Activated CD4-positive, alpha-beta T cell treated with anti-CD3 and anti-CD28 coated beads for 36 hours (primary cell): ENCODE measurements at regions of chr11 and their contacts with region 1.

Region 1: DNA sequence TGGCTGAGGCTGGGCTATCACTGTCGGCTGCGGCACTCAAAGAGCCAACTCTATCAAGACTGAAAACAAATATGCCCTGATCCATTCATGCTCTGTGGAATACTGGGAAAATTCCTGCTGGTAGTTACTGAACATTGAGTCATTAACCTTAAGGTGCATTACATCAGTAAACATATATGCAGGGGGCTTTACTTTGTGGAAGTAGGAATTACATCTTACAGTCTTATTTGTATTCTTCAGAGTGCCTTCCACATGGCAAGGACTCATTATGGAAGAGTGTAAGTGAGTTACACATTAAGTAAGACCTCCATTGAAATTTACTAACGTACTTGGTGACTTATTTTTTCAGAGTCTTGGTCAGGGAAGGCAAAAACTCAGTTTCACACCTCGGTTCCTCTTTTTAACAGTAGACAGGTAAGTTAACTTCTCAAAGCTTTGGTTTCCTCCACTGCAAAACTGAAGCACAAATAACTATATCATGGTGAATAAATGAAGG is 4.5 kb downstream of the OR5B21 start:
- DNase-seq: no peak
- ATAC-seq: no peak
- H3K4me3 Mint-ChIP-seq: no peak overlapping the region
- H3K27ac Mint-ChIP-seq: no peak overlapping the region
- H3K4me1 Mint-ChIP-seq: peaks cover 28% of the 10 kb centered on the region
- H3K27me3 Mint-ChIP-seq: no peaks in the 10 kb centered on the region

Region 2: DNA sequence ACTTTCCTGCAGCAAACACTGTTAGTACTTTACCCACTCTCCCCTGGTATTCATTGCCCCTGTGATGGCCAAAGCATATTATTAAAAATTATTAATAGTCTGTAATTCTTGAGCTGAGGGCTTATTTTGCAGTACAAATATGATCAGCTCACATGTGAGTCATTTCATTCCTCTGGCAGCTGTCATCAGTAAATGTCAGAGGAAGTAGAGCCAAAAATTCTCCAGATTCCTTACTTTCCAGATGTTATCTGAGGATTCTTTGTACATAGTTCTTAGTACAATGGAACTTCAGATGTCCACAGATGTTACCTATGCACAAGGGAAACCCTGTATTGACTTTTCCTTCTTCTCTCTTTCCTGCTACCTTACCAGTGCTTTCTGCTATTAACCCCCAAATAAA is 109.2 kb before region 1 on chr11:
- CTCF ChIA-PET with region 1: no interaction called
- POLR2A ChIA-PET with region 1: interaction called, 4 read pairs
- intact Hi-C with region 1: loop called in 1 of 2 experiments (anchors 5 kb)
- DNase-seq: no peak
- ATAC-seq: no peak
- H3K4me3 Mint-ChIP-seq: no peak overlapping the region
- H3K27ac Mint-ChIP-seq: no peak overlapping the region
- H3K4me1 Mint-ChIP-seq: peaks cover 11% of the 10 kb centered on the region
- H3K27me3 Mint-ChIP-seq: peaks cover 4% of the 10 kb centered on the region

Region 3: GRCh38 chr11:58654079-58654907 is 150.9 kb after region 1 on chr11:
- CTCF ChIA-PET with region 1: no interaction called
- POLR2A ChIA-PET with region 1: no interaction called
- intact Hi-C with region 1: no loop called
- DNase-seq: peak; percentile 90
- ATAC-seq: peak; percentile 87
- H3K4me3 Mint-ChIP-seq: no peak overlapping the region
- H3K27ac Mint-ChIP-seq: peak overlapping the region; percentile 62
- H3K4me1 Mint-ChIP-seq: peaks cover 20% of the 10 kb centered on the region
- H3K27me3 Mint-ChIP-seq: no peaks in the 10 kb centered on the region